ENCODE measurements at regions of chr6 and their contacts with region 1.

Region 1: DNA sequence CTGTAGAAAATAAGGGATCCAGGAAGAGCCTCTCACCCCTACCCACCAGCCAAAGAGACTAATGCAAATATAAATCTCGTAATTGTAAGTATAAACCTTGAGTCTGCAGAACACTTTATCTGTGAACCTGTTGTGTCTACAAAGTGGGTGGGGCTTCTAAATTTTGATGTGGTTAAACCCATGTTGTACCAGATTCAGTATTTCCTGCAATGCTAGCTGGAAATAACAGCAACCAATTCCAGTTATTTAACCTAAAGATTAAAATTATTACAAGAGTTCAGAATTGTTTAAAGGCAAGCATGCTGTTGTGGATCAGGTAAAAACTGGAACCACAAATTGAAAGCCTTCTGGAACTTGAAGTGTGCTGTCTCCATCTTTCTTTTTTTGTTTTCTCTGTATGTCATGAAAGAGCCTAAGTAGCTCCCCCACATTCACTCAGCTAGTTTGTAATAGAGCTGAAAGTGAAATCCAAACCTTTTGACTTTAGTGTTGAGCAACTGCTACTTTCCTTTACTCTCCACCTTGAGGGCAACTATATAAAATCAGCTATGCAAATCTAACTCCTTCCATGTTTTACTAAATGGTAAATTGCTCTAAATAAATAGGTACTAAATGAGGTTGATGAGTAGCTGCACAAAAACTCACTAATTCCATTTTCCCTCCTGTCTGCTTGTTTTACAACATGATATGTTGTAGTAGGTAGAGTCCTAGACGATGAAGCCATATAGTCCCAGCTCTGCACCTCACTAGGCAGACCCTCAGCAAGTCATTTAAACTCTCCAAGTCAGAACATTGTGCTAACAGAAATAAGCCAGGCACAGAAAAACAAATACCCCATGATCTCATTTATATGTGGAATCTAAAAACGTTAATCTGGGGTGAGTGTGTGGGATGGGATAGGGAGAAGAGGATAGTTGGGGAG is 17.9 kb upstream of the THEMIS start:
- DNase-seq: peak; percentile 32
- H3K4me3 Mint-ChIP-seq: peak overlapping the region; percentile 79
- H3K27ac Mint-ChIP-seq: peak overlapping the region; percentile 90
- H3K4me1 Mint-ChIP-seq: peaks cover 92% of the 10 kb centered on the region
- H3K27me3 Mint-ChIP-seq: no peaks in the 10 kb centered on the region

Region 2: DNA sequence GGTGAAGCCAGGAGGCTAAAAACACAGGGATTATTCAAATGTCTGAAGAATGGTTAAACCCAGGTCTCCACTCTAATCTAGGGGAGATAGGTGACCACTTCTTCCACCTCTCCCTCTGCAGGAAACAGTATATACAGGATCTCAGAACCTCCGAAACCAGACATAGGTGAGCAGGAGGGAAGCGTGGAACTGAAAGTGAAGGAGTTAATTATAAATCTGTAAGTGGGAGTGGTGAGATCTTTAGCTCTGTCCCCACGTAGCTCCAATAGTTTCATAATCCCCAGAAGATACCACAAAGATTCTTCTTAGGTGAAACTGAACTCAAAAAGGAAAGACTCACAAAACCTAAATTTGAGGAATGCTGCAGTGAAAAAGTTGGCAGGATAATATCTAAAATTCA is 94.7 kb before region 1 on chr6:
- CTCF ChIA-PET with region 1: no interaction called
- DNase-seq: no peak
- H3K4me3 Mint-ChIP-seq: no peak overlapping the region
- H3K27ac Mint-ChIP-seq: no peak overlapping the region
- H3K4me1 Mint-ChIP-seq: peaks cover 24% of the 10 kb centered on the region
- H3K27me3 Mint-ChIP-seq: no peaks in the 10 kb centered on the region

Region 3: DNA sequence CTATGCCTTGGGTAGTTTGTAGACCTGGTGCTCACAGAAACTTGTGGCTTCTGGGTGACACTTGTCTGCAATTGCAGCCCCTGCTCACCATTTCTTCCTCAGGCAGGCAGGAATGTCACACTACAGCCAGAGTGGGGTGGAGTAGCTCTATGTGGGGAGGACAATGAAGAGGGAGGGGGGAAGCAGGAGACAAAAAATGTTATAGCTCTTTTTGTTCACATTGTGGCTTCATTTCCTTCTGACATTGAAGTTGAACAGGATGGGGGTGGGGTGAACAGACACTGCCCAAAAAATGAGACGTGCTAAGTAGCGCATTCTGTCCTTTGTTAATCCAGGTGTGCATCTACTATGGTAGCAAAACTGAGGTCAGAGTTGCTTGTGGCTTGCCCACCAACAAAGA is 17.8 kb before region 1 on chr6 and contains the start of gene THEMIS:
- CTCF ChIA-PET with region 1: interaction called, 14 read pairs
- DNase-seq: peak; percentile 74
- H3K4me3 Mint-ChIP-seq: peak within 1 kb of the TSS; percentile 95
- H3K27ac Mint-ChIP-seq: peak within 1 kb of the TSS; percentile 95
- H3K4me1 Mint-ChIP-seq: peaks cover 61% of the 10 kb centered on the region
- H3K27me3 Mint-ChIP-seq: no peaks in the 10 kb centered on the region

Region 4: GRCh38 chr6:127933852-127934840 is 15.4 kb after region 1 on chr6:
- CTCF ChIA-PET with region 1: interaction called, 11 read pairs
- DNase-seq: peak; percentile 77
- H3K4me3 Mint-ChIP-seq: peak overlapping the region; percentile 50
- H3K27ac Mint-ChIP-seq: peak overlapping the region; percentile 97
- H3K4me1 Mint-ChIP-seq: peaks cover 55% of the 10 kb centered on the region
- H3K27me3 Mint-ChIP-seq: no peaks in the 10 kb centered on the region

Region 5: DNA sequence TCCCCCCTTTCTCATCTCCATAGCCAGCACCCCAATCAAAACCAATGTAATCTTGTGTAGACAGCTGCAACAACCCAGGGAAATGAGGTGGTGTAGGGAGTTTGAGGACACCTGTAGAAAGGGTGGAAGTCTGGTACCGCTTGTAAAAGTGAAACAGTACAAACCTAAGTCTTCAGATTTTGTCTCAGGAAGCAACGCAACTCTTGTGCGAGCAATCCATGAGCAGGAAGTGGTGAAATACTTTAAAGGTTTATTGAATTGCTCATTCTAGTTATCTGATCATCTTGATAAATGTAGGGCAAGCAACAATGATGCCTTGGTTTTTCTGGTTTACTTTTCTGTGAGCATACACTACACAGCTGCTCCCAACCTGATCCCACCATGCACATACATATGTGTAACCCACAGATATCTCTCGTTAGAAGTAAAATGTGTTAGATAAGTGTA is 53.2 kb after region 1 on chr6:
- CTCF ChIA-PET with region 1: interaction called, 14 read pairs
- DNase-seq: peak; percentile 67
- H3K4me3 Mint-ChIP-seq: peak overlapping the region; percentile 66
- H3K27ac Mint-ChIP-seq: peak overlapping the region; percentile 97
- H3K4me1 Mint-ChIP-seq: peaks cover 69% of the 10 kb centered on the region
- H3K27me3 Mint-ChIP-seq: no peaks in the 10 kb centered on the region

Region 6: GRCh38 chr6:128069188-128069587 is 150.4 kb after region 1 on chr6:
- CTCF ChIA-PET with region 1: no interaction called
- DNase-seq: no peak
- H3K4me3 Mint-ChIP-seq: no peak overlapping the region
- H3K27ac Mint-ChIP-seq: no peak overlapping the region
- H3K4me1 Mint-ChIP-seq: no peaks in the 10 kb centered on the region
- H3K27me3 Mint-ChIP-seq: no peaks in the 10 kb centered on the region